ENCODE measurements at regions of chr6 and their contacts with region 1.

Region 1: DNA sequence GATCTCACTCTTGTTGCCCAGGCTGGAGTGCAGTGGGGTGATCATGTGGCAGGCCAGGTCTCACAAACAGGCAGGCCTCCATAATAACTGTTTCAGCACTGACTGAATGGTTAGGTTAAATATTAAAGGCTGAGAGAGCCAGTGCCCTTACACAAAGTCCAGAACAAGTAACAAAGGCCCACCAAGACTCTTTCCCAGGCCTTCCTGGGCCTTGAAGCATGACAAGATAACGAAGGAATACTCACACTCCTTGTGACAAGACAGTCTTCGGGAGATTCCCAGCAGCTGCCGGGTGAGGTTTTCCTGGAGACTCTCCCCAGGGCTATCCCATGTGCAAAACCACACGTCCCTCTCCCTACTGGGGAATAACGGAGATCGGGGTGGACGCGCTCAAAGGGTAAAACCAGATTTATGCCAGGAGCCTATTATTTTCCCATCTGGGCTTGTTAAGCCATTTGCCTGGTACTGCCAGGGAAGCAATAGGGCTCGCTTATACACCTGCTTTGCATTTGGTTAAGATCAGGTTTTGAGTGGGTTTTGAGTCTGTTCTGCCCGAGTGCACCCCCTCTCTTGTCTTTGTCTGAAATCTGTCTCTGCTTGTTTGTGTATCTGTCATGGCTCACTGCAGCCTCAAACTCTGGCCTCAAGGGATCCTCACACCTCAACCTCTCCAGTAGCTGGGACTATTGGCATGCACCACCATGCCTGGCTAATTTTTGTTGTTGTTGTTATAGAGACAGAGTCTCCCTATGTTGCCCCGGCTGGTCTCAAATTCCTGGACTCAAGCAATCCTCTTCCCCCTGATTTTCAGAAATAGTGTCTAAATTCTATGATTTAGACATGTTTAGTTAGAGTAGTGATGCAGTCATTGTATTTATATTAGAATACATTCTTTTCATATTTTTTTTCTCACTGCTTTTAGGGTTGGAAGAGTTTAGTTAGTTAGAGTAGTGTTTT is 1.4 kb upstream of the ENPP3 start:
- DNase-seq: no peak
- ATAC-seq: no peak
- H3K4me3 ChIP-seq: no peak overlapping the region
- H3K4me3 Mint-ChIP-seq: no peak overlapping the region
- H3K27ac ChIP-seq: no peak overlapping the region
- H3K27ac Mint-ChIP-seq: no peak overlapping the region
- H3K4me1 ChIP-seq: no peaks in the 10 kb centered on the region
- H3K4me1 Mint-ChIP-seq: no peaks in the 10 kb centered on the region
- H3K27me3 ChIP-seq: no peaks in the 10 kb centered on the region
- H3K27me3 Mint-ChIP-seq: no peaks in the 10 kb centered on the region
- CTCF ChIP-seq: no peak

Region 2: GRCh38 chr6:131813991-131814390 is 178.3 kb after region 1 on chr6:
- CTCF ChIA-PET with region 1: no interaction called
- POLR2A ChIA-PET with region 1: no interaction called
- intact Hi-C with region 1: no loop called
- DNase-seq: no peak
- ATAC-seq: no peak
- H3K4me3 ChIP-seq: no peak overlapping the region
- H3K4me3 Mint-ChIP-seq: no peak overlapping the region
- H3K27ac ChIP-seq: no peak overlapping the region
- H3K27ac Mint-ChIP-seq: no peak overlapping the region
- H3K4me1 ChIP-seq: no peaks in the 10 kb centered on the region
- H3K4me1 Mint-ChIP-seq: peaks cover 4% of the 10 kb centered on the region
- H3K27me3 ChIP-seq: peaks cover 11 to 18% of the 10 kb centered on the region in 2 experiments
- H3K27me3 Mint-ChIP-seq: peaks cover 55% of the 10 kb centered on the region
- CTCF ChIP-seq: no peak

Region 3: GRCh38 chr6:132499456-132500171 is 864.0 kb after region 1 on chr6:
- CTCF ChIA-PET with region 1: no interaction called
- POLR2A ChIA-PET with region 1: no interaction called
- intact Hi-C with region 1: loop called in 1 of 2 experiments (anchors 10 kb)
- DNase-seq: no peak
- ATAC-seq: no peak
- H3K4me3 ChIP-seq: no peak overlapping the region
- H3K4me3 Mint-ChIP-seq: no peak overlapping the region
- H3K27ac ChIP-seq: no peak overlapping the region
- H3K27ac Mint-ChIP-seq: no peak overlapping the region
- H3K4me1 ChIP-seq: no peaks in the 10 kb centered on the region
- H3K4me1 Mint-ChIP-seq: peaks cover 55% of the 10 kb centered on the region
- H3K27me3 ChIP-seq: no peaks in the 10 kb centered on the region
- H3K27me3 Mint-ChIP-seq: no peaks in the 10 kb centered on the region
- CTCF ChIP-seq: no peak

Measured in CD4-positive, alpha-beta T cell (primary cell).